SK-N-SH (cell line): ENCODE measurements at regions of chrX and their contacts with region 1.

Region 1: GRCh38 chrX:133792198-133792953 is 193.0 kb downstream of the GPC3 start:
- DNase-seq: peak; percentile 65
- H3K4me3 ChIP-seq: peak overlapping the region; percentile 37 to 38; a peak in 3 of 4 replicates
- H3K27ac ChIP-seq: peak overlapping the region in 1 of 2 experiments; percentile 47; a peak in 1 of 4 replicates
- H3K4me1 ChIP-seq: no peaks in the 10 kb centered on the region
- H3K27me3 ChIP-seq: peaks cover 11% of the 10 kb centered on the region
- CTCF ChIP-seq: peak; percentile 99
- EP300 ChIP-seq: no peak
- RAD21 ChIP-seq: peak; percentile 87

Region 2: GRCh38 chrX:132900633-132901293 is 891.6 kb before region 1 on chrX:
- CTCF ChIA-PET with region 1: no interaction called
- POLR2A ChIA-PET with region 1: no interaction called
- DNase-seq: no peak
- H3K4me3 ChIP-seq: no peak overlapping the region
- H3K27ac ChIP-seq: no peak overlapping the region
- H3K4me1 ChIP-seq: no peaks in the 10 kb centered on the region
- H3K27me3 ChIP-seq: no peaks in the 10 kb centered on the region
- CTCF ChIP-seq: no peak
- EP300 ChIP-seq: no peak
- RAD21 ChIP-seq: no peak

Region 3: GRCh38 chrX:133033010-133033409 is 759.4 kb before region 1 on chrX:
- CTCF ChIA-PET with region 1: no interaction called
- POLR2A ChIA-PET with region 1: no interaction called
- DNase-seq: no peak
- H3K4me3 ChIP-seq: no peak overlapping the region
- H3K27ac ChIP-seq: no peak overlapping the region
- H3K4me1 ChIP-seq: no peaks in the 10 kb centered on the region
- H3K27me3 ChIP-seq: no peaks in the 10 kb centered on the region
- CTCF ChIP-seq: no peak
- EP300 ChIP-seq: no peak
- RAD21 ChIP-seq: no peak

Region 4: DNA sequence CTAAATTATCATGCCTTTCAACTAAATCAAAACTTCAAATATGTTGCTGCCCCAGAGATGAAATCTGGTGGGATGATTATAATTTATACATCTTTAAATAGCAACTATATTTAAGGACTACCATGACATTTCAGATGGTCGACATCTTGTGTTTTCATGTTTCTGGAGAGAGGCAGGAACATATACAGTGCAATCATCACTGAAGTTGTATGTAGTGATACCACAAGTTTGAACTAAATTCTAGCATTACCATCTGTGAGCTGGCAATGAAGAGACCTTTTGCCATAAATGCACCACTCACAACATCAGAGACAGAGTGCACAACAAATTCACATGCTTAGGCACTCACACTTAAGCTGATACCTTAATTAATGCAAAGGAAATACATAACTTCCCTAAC is 180.7 kb before region 1 on chrX:
- CTCF ChIA-PET with region 1: no interaction called
- POLR2A ChIA-PET with region 1: no interaction called
- DNase-seq: no peak
- H3K4me3 ChIP-seq: no peak overlapping the region
- H3K27ac ChIP-seq: no peak overlapping the region
- H3K4me1 ChIP-seq: no peaks in the 10 kb centered on the region
- H3K27me3 ChIP-seq: no peaks in the 10 kb centered on the region
- CTCF ChIP-seq: no peak
- EP300 ChIP-seq: no peak
- RAD21 ChIP-seq: no peak

Region 5: GRCh38 chrX:133638285-133638684 is 154.1 kb before region 1 on chrX:
- CTCF ChIA-PET with region 1: no interaction called
- POLR2A ChIA-PET with region 1: no interaction called
- DNase-seq: no peak
- H3K4me3 ChIP-seq: no peak overlapping the region
- H3K27ac ChIP-seq: no peak overlapping the region
- H3K4me1 ChIP-seq: peaks cover 0 to under 1% of the 10 kb centered on the region in 2 experiments; a peak in 1 of 4 replicates
- H3K27me3 ChIP-seq: peaks cover 9% of the 10 kb centered on the region; the same call in 1 of the 2 replicates
- CTCF ChIP-seq: no peak
- EP300 ChIP-seq: no peak
- RAD21 ChIP-seq: no peak

Region 6: DNA sequence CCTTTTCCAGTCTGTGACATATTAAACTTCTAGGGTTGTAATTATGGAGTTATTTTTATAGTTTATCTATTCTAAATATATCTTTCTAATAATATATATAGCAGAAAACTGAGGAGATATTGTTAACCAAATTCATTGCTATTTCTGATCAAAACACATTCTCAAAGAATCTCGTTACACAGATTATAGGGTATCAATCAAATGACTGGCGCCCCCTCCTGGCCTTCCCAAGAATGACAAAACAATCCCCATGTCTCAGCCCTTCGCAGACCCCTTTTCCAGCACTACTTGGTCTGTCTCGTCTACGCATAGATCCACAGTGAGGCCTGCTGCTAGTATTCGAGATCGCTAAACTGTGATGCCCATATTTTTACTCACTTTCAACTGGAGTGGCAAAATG is 16.3 kb before region 1 on chrX:
- CTCF ChIA-PET with region 1: interaction called, 21 read pairs
- POLR2A ChIA-PET with region 1: no interaction called
- DNase-seq: peak; percentile 31
- H3K4me3 ChIP-seq: no peak overlapping the region
- H3K27ac ChIP-seq: no peak overlapping the region
- H3K4me1 ChIP-seq: peaks cover 0 to 4% of the 10 kb centered on the region in 2 experiments; a peak in 1 of 4 replicates
- H3K27me3 ChIP-seq: no peaks in the 10 kb centered on the region; the same call in none of the 2 replicates
- CTCF ChIP-seq: peak; percentile 74
- EP300 ChIP-seq: no peak
- RAD21 ChIP-seq: peak; percentile 57

Region 7: DNA sequence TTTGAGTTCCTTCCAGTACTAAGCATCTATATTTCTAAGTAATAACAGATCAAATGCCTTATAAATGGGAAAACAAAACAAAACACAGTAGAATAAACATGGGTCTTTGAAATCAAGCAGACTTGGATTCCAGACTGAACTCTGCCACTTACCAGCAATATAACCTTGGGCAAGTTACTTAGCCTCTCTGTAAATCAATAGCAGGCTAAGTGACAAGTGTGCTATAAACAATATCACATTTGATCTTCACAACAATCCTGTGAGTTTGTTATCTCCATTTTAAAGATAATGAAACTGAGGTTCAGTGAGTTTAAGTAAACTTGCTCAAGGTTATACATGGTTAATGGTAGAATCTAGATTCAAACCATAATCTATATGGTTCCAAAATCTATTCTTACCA is 27.2 kb after region 1 on chrX:
- CTCF ChIA-PET with region 1: interaction called, 13 read pairs
- POLR2A ChIA-PET with region 1: no interaction called
- DNase-seq: no peak
- H3K4me3 ChIP-seq: no peak overlapping the region
- H3K27ac ChIP-seq: no peak overlapping the region
- H3K4me1 ChIP-seq: no peaks in the 10 kb centered on the region
- H3K27me3 ChIP-seq: no peaks in the 10 kb centered on the region; the same call in 1 of the 2 replicates
- CTCF ChIP-seq: no peak
- EP300 ChIP-seq: no peak
- RAD21 ChIP-seq: no peak

Region 8: GRCh38 chrX:134026565-134027311 is 234.4 kb after region 1 on chrX:
- CTCF ChIA-PET with region 1: interaction called, 31 read pairs
- POLR2A ChIA-PET with region 1: no interaction called
- DNase-seq: peak; percentile 31
- H3K4me3 ChIP-seq: no peak overlapping the region
- H3K27ac ChIP-seq: no peak overlapping the region
- H3K4me1 ChIP-seq: no peaks in the 10 kb centered on the region
- H3K27me3 ChIP-seq: no peaks in the 10 kb centered on the region; the same call in 1 of the 2 replicates
- CTCF ChIP-seq: peak; percentile 52
- EP300 ChIP-seq: no peak
- RAD21 ChIP-seq: peak; percentile 63

Region 9: DNA sequence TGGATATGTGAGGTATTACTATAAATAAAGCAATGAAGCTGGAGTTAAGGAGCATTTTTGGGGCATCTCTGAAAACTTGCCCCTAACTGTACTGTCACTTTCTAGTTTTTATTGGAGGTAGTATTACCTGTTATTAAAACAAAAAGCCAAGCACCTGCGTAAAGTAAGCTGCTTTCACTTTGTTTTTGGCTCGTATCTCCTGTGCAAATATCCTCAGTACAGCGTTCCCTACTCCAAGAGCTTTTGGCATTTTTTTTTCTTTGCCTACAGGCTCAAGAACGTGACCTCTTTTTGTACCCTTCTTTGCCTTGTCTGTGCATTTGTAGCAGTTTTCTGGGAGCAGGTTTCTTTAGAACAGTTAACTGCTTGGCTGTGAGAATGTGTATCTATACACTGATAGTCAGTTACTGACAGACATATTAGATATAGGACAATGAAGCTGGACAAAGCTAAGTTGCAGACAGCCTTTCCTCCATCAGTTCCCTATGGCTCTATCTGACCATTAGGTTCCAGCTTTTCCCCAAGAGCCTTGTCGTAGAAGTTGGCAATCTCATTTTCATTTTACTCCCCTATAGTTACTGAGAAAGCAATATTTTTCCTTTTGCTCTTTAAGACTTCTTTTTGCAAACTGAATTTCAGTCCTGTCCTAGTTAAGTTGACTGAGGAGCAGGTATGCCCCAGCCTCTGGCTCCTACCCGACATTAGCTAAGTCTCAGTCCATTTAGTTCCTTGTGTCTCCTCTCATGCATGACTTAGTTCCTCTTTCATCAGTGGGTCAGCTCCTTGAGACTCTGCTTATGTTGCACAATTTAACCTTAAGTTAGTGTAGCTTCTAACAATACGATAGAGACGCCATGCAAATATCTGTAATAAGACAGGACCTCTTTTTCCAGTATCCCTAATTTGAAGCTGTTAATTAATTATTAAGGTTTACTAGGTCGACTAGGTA is 596.1 kb after region 1 on chrX:
- CTCF ChIA-PET with region 1: interaction called, 11 read pairs
- POLR2A ChIA-PET with region 1: no interaction called
- DNase-seq: no peak
- H3K4me3 ChIP-seq: no peak overlapping the region
- H3K27ac ChIP-seq: no peak overlapping the region
- H3K4me1 ChIP-seq: no peaks in the 10 kb centered on the region
- H3K27me3 ChIP-seq: no peaks in the 10 kb centered on the region
- CTCF ChIP-seq: no peak
- EP300 ChIP-seq: no peak
- RAD21 ChIP-seq: no peak